ENCODE measurements at regions of chr5 and their contacts with region 1.

Region 1: DNA sequence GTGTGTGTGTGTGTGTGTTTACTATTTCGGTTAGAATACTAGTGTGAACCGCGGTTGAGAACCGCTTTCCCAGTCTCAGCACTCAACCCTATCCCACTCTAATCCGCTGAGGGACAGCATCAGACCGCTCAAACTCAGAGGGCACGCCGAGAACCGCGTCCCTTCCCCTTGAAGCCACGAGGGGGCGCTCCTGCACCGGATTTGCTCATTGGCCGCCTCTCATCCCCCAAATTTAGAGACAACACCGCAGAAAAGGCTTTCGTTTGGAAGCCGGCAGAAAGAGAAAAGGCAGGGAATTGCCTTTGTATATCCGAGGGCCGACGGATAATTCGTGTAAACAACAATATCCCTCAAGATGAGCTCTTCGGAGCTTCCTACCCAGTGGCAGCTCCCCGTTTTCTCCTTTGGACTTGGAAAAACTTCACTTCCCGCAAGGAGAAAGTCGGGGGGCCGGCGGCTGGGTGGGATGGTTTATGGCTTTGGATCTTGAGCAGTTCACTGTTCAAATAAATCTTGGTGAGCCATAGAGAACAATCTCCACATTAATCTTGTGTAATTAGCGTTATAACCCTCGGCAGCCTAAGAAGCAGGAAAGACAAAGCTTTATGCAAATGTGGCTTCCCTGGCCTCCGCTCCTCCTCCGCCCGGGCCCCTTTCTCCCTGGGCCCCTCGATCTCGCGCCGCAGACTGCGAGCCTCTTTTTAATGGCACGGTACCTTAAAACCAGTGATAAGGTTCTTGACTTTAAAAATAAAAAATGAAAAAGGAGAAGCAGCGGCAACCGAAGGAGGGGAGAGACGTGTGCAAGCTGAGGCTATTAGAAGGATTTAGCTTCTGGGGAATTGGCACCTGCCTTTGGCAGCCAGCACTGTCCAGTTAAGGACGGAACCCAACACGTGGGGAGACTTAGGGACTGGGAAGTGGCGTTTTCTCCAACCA is 296.8 kb downstream of the PARP8 start:
- DNase-seq: no peak
- ATAC-seq: peak; percentile 94
- H3K4me3 ChIP-seq: peak overlapping the region; percentile 65
- H3K27ac ChIP-seq: no peak overlapping the region
- H3K4me1 ChIP-seq: peaks cover 3% of the 10 kb centered on the region; the same call in 1 of the 2 replicates
- H3K27me3 ChIP-seq: peaks cover 2 to 27% of the 10 kb centered on the region in 2 experiments; a peak in 3 of 4 replicates
- CTCF ChIP-seq: peak; percentile 97 to 99 (median 98); a peak in 5 of 6 replicates
- EP300 ChIP-seq: no peak
- POLR2A ChIP-seq: no peak
- RAD21 ChIP-seq: peak; percentile 87

Region 2: GRCh38 chr5:50984640-50985039 is 21.4 kb after region 1 on chr5:
- CTCF ChIA-PET with region 1: interaction called, 10 read pairs
- POLR2A ChIA-PET with region 1: no interaction called
- RAD21 ChIA-PET with region 1: no interaction called
- SMC1A ChIA-PET with region 1: interaction called, 8 read pairs
- in situ Hi-C with region 1: no loop called
- intact Hi-C with region 1: no loop called
- DNase-seq: no peak
- ATAC-seq: no peak
- H3K4me3 ChIP-seq: no peak overlapping the region
- H3K27ac ChIP-seq: no peak overlapping the region
- H3K4me1 ChIP-seq: no peaks in the 10 kb centered on the region
- H3K27me3 ChIP-seq: no peaks in the 10 kb centered on the region
- CTCF ChIP-seq: no peak
- EP300 ChIP-seq: no peak
- POLR2A ChIP-seq: no peak
- RAD21 ChIP-seq: no peak

Region 3: DNA sequence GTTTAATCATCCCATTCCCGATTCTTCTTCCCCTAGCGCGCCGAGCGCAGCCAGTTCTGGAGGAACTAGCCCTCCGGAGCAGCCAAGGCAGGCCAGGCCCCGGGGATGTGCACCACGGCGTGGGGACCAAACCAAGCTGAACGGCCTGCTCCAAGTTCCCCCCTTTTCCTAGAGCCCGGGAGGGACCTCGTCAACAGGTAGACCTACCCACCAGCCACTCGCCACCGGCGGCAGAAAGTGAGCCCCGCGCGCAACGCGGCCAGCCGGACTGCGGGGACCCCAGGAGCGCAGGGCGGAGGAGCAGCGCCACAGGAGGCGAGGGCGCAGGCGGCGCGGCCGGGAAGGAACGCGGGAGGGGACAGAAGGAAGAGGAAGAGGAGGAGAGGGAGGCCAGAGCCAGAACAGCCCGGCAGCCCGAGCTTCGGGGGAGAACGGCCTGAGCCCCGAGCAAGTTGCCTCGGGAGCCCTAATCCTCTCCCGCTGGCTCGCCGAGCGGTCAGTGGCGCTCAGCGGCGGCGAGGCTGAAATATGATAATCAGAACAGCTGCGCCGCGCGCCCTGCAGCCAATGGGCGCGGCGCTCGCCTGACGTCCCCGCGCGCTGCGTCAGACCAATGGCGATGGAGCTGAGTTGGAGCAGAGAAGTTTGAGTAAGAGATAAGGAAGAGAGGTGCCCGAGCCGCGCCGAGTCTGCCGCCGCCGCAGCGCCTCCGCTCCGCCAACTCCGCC is 419.7 kb after region 1 on chr5 and contains the start of gene ISL1:
- CTCF ChIA-PET with region 1: interaction called, 3 read pairs
- POLR2A ChIA-PET with region 1: no interaction called
- RAD21 ChIA-PET with region 1: interaction called, 3 read pairs
- SMC1A ChIA-PET with region 1: interaction called, 3 read pairs
- in situ Hi-C with region 1: loop called (anchors 10 kb)
- intact Hi-C with region 1: no loop called
- DNase-seq: no peak
- ATAC-seq: no peak
- H3K4me3 ChIP-seq: no peak within 1 kb of the TSS
- H3K27ac ChIP-seq: no peak within 1 kb of the TSS
- H3K4me1 ChIP-seq: no peaks in the 10 kb centered on the region
- H3K27me3 ChIP-seq: peaks cover 8 to 18% of the 10 kb centered on the region in 2 experiments
- CTCF ChIP-seq: no peak
- EP300 ChIP-seq: no peak
- POLR2A ChIP-seq: no peak
- RAD21 ChIP-seq: no peak
- polyA plus RNA-seq, gene ISL1: not detected

Region 4: GRCh38 chr5:51960617-51961115 is 997.5 kb after region 1 on chr5:
- CTCF ChIA-PET with region 1: no interaction called
- POLR2A ChIA-PET with region 1: no interaction called
- RAD21 ChIA-PET with region 1: no interaction called
- SMC1A ChIA-PET with region 1: no interaction called
- in situ Hi-C with region 1: no loop called
- intact Hi-C with region 1: loop called (anchors 2 kb)
- DNase-seq: no peak
- ATAC-seq: peak; percentile 58
- H3K4me3 ChIP-seq: no peak overlapping the region
- H3K27ac ChIP-seq: no peak overlapping the region
- H3K4me1 ChIP-seq: no peaks in the 10 kb centered on the region
- H3K27me3 ChIP-seq: no peaks in the 10 kb centered on the region; a peak in 1 of 4 replicates
- CTCF ChIP-seq: peak in 2 of 3 experiments; percentile 24 to 56; a peak in 1 of 6 replicates
- EP300 ChIP-seq: no peak
- POLR2A ChIP-seq: no peak
- RAD21 ChIP-seq: peak; percentile 56

Region 5: GRCh38 chr5:52007230-52007858 is 1044.1 kb after region 1 on chr5:
- CTCF ChIA-PET with region 1: interaction called, 5 read pairs
- POLR2A ChIA-PET with region 1: no interaction called
- RAD21 ChIA-PET with region 1: no interaction called
- SMC1A ChIA-PET with region 1: interaction called, 5 read pairs
- in situ Hi-C with region 1: loop called (anchors 5 kb)
- intact Hi-C with region 1: loop called (anchors 1 kb)
- DNase-seq: no peak
- ATAC-seq: peak; percentile 69
- H3K4me3 ChIP-seq: no peak overlapping the region
- H3K27ac ChIP-seq: no peak overlapping the region
- H3K4me1 ChIP-seq: no peaks in the 10 kb centered on the region
- H3K27me3 ChIP-seq: no peaks in the 10 kb centered on the region
- CTCF ChIP-seq: peak; percentile 44 to 73 (median 49); a peak in 5 of 6 replicates
- EP300 ChIP-seq: no peak
- POLR2A ChIP-seq: no peak
- RAD21 ChIP-seq: peak; percentile 74

Region 6: GRCh38 chr5:52356311-52356918 is 1393.2 kb after region 1 on chr5:
- CTCF ChIA-PET with region 1: interaction called, 7 read pairs
- POLR2A ChIA-PET with region 1: interaction called, 3 read pairs
- RAD21 ChIA-PET with region 1: interaction called, 6 read pairs
- SMC1A ChIA-PET with region 1: interaction called, 5 read pairs
- in situ Hi-C with region 1: loop called (anchors 10 kb)
- intact Hi-C with region 1: no loop called
- DNase-seq: no peak
- ATAC-seq: no peak
- H3K4me3 ChIP-seq: no peak overlapping the region
- H3K27ac ChIP-seq: no peak overlapping the region
- H3K4me1 ChIP-seq: no peaks in the 10 kb centered on the region
- H3K27me3 ChIP-seq: no peaks in the 10 kb centered on the region
- CTCF ChIP-seq: peak; percentile 45 to 52 (median 48); a peak in 4 of 6 replicates
- EP300 ChIP-seq: no peak
- POLR2A ChIP-seq: no peak
- RAD21 ChIP-seq: peak; percentile 49

Region 7: GRCh38 chr5:52657247-52657645 is 1694.0 kb after region 1 on chr5:
- CTCF ChIA-PET with region 1: interaction called, 38 read pairs
- POLR2A ChIA-PET with region 1: no interaction called
- RAD21 ChIA-PET with region 1: interaction called, 8 read pairs
- SMC1A ChIA-PET with region 1: interaction called, 8 read pairs
- in situ Hi-C with region 1: loop called (anchors 5 kb)
- intact Hi-C with region 1: loop called (anchors 1 kb)
- DNase-seq: no peak
- ATAC-seq: peak; percentile 31; the same call in 1 of the 3 replicates
- H3K4me3 ChIP-seq: no peak overlapping the region
- H3K27ac ChIP-seq: no peak overlapping the region
- H3K4me1 ChIP-seq: no peaks in the 10 kb centered on the region
- H3K27me3 ChIP-seq: no peaks in the 10 kb centered on the region; a peak in 1 of 4 replicates
- CTCF ChIP-seq: peak; percentile 26 to 46 (median 33); a peak in 4 of 6 replicates
- EP300 ChIP-seq: no peak
- POLR2A ChIP-seq: no peak
- RAD21 ChIP-seq: peak; percentile 57

Measured in GM12878 (cell line).